Sigmoid colon (tissue), 7 donors: ENCODE measurements at regions of chr9 and their contacts with region 1.

Region 1: DNA sequence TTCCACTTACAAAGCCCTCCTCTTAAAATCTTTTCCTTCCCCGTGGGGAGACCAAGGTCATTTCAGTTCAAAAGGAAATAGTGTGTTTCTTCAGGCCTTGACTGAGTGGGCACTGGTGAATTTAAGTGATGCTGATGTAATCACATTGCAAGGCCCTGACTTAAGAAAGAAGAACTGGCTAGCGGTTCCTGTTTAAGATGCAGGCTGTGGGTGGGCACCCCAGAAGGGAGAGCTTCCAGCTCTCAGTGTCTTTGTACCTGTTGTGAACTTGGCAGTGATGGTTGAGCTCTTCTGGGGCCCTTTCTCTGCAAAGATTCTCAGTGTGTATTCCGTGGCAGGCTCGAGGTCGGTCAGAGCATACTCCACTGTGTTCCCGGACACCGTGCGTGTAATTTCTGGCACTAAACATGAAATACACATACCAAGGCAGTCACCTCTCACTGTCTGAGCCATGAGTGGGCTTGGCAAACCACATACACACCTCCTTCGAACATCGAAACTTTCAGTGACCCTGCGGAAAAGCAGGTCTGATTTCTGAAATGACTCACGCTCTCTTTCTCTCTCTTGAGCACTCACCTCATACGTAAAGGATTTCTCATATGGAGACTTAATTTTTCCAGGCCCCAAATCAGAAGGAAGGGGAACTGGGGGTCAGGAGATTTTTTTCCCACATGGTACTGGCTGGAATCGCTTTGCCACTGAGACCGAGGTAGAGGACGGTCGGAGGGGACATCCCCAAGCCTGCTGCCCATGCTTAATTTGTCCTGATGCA is 81.9 kb downstream of the TNC start:
- DNase-seq: no peak
- H3K4me3 ChIP-seq: no peak overlapping the region
- H3K27ac ChIP-seq: peak overlapping the region; percentile 61 to 91 (median 83)
- H3K4me1 ChIP-seq: peaks cover 0 to 89% (median 75%) of the 10 kb centered on the region in 4 donors
- H3K27me3 ChIP-seq: no peaks in the 10 kb centered on the region
- CTCF ChIP-seq: no peak
- EP300 ChIP-seq: peak in 2 of 4 donors; percentile 6 to 15
- POLR2A ChIP-seq: no peak

Region 2: DNA sequence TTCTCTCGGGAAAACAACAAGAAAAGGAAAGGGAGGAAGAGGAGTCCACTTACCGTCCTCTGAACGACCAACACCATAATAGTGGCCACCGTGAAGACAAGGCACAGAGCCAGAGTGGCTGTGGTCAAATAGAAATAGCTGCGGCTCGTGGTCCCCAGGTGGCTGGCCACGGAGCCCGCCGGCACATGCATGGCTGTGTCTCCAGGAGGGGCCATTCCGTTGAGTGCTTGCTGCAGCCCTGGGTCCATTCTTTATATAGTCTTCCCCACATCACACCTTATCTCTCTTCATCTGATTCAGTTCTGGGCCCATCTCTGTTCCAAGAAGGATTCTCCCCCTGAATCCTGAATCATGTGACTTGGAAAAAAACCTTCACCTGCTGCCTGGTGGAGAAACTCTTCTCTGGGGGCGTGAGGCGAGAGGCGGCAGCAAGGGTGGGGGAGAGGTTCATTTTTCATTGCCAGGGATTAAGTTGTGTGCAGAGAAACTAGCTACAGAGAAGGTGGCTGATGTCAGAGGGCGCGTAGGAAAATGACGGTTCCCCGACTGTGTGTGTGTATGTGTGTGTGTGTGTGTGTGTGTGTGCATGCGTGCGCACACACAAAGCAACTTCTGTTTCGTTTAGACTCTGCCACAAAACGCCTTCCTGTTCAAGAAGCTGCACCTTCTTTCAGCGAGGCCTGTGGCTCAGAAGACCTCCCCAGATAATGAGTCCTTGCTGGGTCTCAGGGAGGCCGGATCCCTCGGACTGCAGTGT is 105.8 kb before region 1 on chr9 and contains the start of gene TNFSF8:
- intact Hi-C with region 1: no loop called
- DNase-seq: no peak
- H3K4me3 ChIP-seq: peak within 1 kb of the TSS in 3 of 4 donors; percentile 5 to 34 (median 23)
- H3K27ac ChIP-seq: peak within 1 kb of the TSS in 3 of 4 donors; percentile 14 to 40 (median 36)
- H3K4me1 ChIP-seq: no peaks in the 10 kb centered on the region
- H3K27me3 ChIP-seq: no peaks in the 10 kb centered on the region
- CTCF ChIP-seq: no peak
- EP300 ChIP-seq: no peak
- POLR2A ChIP-seq: no peak
- total RNA-seq, gene TNFSF8: 1.4 to 3.0 (median 1.9) TPM

Region 3: GRCh38 chr9:115104908-115105307 is 68.9 kb after region 1 on chr9:
- intact Hi-C with region 1: loop called (anchors 1 kb)
- DNase-seq: no peak
- H3K4me3 ChIP-seq: no peak overlapping the region
- H3K27ac ChIP-seq: peak overlapping the region in 3 of 4 donors; percentile 69 to 97 (median 97)
- H3K4me1 ChIP-seq: peaks cover 0 to 90% (median 69%) of the 10 kb centered on the region in 4 donors
- H3K27me3 ChIP-seq: no peaks in the 10 kb centered on the region
- CTCF ChIP-seq: no peak
- EP300 ChIP-seq: no peak
- POLR2A ChIP-seq: no peak

Region 4: GRCh38 chr9:115117999-115118878 is 82.2 kb after region 1 on chr9 and contains the start of gene TNC:
- intact Hi-C with region 1: loop called (anchors 5 kb)
- DNase-seq: peak; percentile 94
- H3K4me3 ChIP-seq: peak within 1 kb of the TSS; percentile 28 to 61 (median 56)
- H3K27ac ChIP-seq: peak within 1 kb of the TSS; percentile 88 to 97 (median 96)
- H3K4me1 ChIP-seq: peaks cover 0 to 49% (median 42%) of the 10 kb centered on the region in 4 donors
- H3K27me3 ChIP-seq: no peaks in the 10 kb centered on the region
- CTCF ChIP-seq: no peak
- EP300 ChIP-seq: peak in 2 of 4 donors; percentile 63 to 85
- POLR2A ChIP-seq: peak; percentile 63 to 93
- total RNA-seq, gene TNC: 127 to 742 (median 590) TPM

Region 5: GRCh38 chr9:115146581-115147021 is 110.6 kb after region 1 on chr9:
- intact Hi-C with region 1: loop called (anchors 5 kb)
- DNase-seq: peak; percentile 87
- H3K4me3 ChIP-seq: no peak overlapping the region
- H3K27ac ChIP-seq: peak overlapping the region; percentile 85 to 90 (median 88)
- H3K4me1 ChIP-seq: peaks cover 0 to 42% (median 38%) of the 10 kb centered on the region in 4 donors
- H3K27me3 ChIP-seq: no peaks in the 10 kb centered on the region
- CTCF ChIP-seq: no peak
- EP300 ChIP-seq: peak; percentile 85 to 99 (median 98)
- POLR2A ChIP-seq: no peak

Region 6: DNA sequence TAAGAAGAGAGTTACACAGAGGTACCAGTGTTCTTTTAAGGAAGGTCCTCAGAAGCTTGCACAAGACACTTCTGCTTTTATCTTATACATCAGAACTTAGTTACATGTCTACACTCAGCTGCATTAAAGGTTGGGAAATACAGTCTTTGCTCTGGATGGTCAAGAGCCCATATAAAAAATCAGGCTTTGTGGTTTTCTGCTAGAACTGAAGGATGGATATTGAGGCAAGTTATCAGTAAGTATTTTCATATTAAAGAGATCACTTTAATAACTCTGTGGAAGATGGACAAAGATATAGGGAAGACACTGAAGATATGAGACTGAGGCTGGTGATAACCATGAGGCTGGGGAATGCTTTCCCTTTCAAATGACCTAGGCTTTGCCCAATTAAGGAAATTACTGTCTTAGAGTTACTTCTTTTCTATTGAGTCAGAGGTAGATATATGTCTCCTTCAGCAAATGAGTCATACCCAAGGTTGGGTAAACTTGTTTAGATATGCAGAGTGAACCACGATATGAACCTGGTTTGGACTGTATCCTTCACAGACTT is 169.0 kb after region 1 on chr9:
- intact Hi-C with region 1: loop called (anchors 5 kb)
- DNase-seq: no peak
- H3K4me3 ChIP-seq: no peak overlapping the region
- H3K27ac ChIP-seq: peak overlapping the region in 2 of 4 donors; percentile 57 to 77
- H3K4me1 ChIP-seq: peaks cover 0 to 52% (median 39%) of the 10 kb centered on the region in 4 donors
- H3K27me3 ChIP-seq: no peaks in the 10 kb centered on the region
- CTCF ChIP-seq: no peak
- EP300 ChIP-seq: peak in 1 of 4 donors; percentile 44
- POLR2A ChIP-seq: no peak